ENCODE measurements at regions of chr11 and their contacts with region 1.

Region 1: GRCh38 chr11:12963792-12964536 is 45.2 kb upstream of the RASSF10 start:
- DNase-seq: peak; percentile 7
- ATAC-seq: peak; percentile 97
- H3K4me3 ChIP-seq: no peak overlapping the region
- H3K27ac ChIP-seq: no peak overlapping the region
- H3K4me1 ChIP-seq: no peaks in the 10 kb centered on the region
- H3K27me3 ChIP-seq: no peaks in the 10 kb centered on the region
- CTCF ChIP-seq: peak; percentile 68 to 86 (median 75)
- EP300 ChIP-seq: no peak
- POLR2A ChIP-seq: no peak
- RAD21 ChIP-seq: peak; percentile 75

Region 2: DNA sequence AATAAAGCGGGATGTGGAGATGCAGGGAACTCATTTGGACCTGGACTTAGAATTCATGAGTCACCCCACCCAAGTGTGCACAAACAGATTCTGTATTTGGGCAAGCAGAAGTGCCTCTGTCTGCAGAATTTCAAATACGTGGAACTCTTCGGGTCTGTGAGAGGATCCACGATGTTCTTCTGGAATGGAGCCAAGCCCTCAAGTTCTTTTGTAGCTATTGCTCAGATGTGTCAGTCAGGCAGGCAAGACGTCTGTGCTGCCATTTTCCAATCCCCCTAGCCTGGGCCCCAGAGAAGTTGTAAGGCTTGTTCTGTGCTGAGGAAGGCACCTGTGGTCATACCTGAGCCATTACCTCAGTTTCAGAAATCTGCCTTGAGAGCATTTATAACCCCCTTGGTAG is 87.6 kb before region 1 on chr11:
- CTCF ChIA-PET with region 1: no interaction called
- POLR2A ChIA-PET with region 1: no interaction called
- RAD21 ChIA-PET with region 1: no interaction called
- SMC1A ChIA-PET with region 1: no interaction called
- in situ Hi-C with region 1: no loop called
- intact Hi-C with region 1: no loop called
- DNase-seq: no peak
- ATAC-seq: no peak
- H3K4me3 ChIP-seq: no peak overlapping the region
- H3K27ac ChIP-seq: no peak overlapping the region
- H3K4me1 ChIP-seq: no peaks in the 10 kb centered on the region
- H3K27me3 ChIP-seq: peaks cover 1 to 3% of the 10 kb centered on the region in 2 experiments; a peak in 2 of 4 replicates
- CTCF ChIP-seq: no peak
- EP300 ChIP-seq: no peak
- POLR2A ChIP-seq: no peak
- RAD21 ChIP-seq: no peak

Region 3: DNA sequence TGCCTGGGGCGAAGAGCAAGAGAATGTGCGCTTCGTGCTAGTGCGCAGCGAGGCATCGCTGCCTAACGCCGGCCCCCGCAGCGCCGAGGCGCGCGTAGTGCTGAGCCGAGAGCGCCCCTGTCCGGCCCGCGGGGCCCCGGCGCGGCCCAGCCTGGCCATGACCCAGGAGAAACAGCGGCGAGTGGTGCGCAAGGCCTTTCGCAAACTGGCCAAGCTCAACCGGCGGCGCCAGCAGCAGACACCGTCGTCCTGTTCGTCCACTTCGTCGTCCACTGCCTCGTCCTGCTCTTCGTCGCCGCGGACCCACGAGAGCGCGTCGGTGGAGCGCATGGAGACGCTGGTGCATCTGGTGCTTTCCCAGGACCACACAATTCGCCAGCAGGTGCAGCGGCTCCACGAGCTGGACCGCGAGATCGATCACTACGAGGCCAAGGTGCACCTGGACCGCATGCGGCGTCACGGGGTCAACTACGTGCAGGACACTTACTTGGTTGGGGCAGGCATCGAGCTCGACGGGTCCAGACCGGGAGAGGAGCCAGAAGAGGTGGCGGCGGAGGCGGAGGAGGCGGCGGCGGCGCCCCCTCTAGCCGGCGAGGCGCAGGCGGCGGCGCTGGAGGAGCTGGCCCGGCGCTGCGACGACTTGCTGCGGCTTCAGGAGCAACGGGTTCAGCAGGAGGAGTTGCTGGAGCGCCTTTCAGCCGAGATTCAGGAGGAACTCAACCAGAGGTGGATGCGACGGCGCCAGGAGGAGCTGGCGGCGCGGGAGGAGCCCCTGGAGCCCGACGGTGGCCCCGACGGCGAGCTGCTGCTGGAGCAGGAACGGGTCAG is 46.2 kb after region 1 on chr11:
- CTCF ChIA-PET with region 1: interaction called, 6 read pairs
- POLR2A ChIA-PET with region 1: no interaction called
- RAD21 ChIA-PET with region 1: interaction called, 22 read pairs
- SMC1A ChIA-PET with region 1: interaction called, 3 read pairs
- in situ Hi-C with region 1: no loop called
- intact Hi-C with region 1: no loop called
- DNase-seq: no peak
- ATAC-seq: no peak
- H3K4me3 ChIP-seq: no peak overlapping the region
- H3K27ac ChIP-seq: no peak overlapping the region
- H3K4me1 ChIP-seq: no peaks in the 10 kb centered on the region
- H3K27me3 ChIP-seq: peaks cover 0 to 4% of the 10 kb centered on the region in 2 experiments; a peak in 3 of 4 replicates
- CTCF ChIP-seq: no peak; a peak in 1 of 6 replicates
- EP300 ChIP-seq: no peak
- POLR2A ChIP-seq: no peak
- RAD21 ChIP-seq: no peak

Region 4: GRCh38 chr11:13120691-13121090 is 156.7 kb after region 1 on chr11:
- CTCF ChIA-PET with region 1: interaction called, 50 read pairs
- POLR2A ChIA-PET with region 1: no interaction called
- RAD21 ChIA-PET with region 1: interaction called, 13 read pairs
- SMC1A ChIA-PET with region 1: interaction called, 52 read pairs
- in situ Hi-C with region 1: no loop called
- intact Hi-C with region 1: loop called (anchors 2 kb)
- DNase-seq: no peak
- ATAC-seq: no peak
- H3K4me3 ChIP-seq: no peak overlapping the region
- H3K27ac ChIP-seq: no peak overlapping the region
- H3K4me1 ChIP-seq: no peaks in the 10 kb centered on the region
- H3K27me3 ChIP-seq: no peaks in the 10 kb centered on the region
- CTCF ChIP-seq: no peak
- EP300 ChIP-seq: no peak
- POLR2A ChIP-seq: no peak
- RAD21 ChIP-seq: no peak

Region 5: DNA sequence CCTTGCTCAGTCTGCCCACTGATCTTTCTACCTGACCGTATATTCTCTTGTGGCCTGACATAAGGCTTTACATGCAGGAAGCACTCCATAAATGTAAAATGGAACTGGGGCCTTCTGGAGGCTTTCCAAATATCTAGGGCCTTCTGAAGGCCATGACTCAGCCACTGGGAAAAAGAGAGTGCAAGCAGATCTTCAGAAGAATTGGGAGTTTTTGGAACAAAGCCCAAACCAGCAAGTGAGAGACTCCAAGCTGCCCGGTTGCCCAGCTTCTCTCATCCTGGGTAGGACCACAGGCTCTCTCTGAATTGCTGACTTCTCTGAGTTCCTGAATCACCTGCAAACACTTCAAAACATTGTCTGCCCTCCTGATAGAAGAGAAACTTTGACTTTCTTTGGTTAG is 205.7 kb after region 1 on chr11:
- CTCF ChIA-PET with region 1: interaction called, 5 read pairs
- POLR2A ChIA-PET with region 1: no interaction called
- RAD21 ChIA-PET with region 1: interaction called, 5 read pairs
- SMC1A ChIA-PET with region 1: interaction called, 4 read pairs
- in situ Hi-C with region 1: no loop called
- intact Hi-C with region 1: loop called (anchors 5 kb)
- DNase-seq: no peak
- ATAC-seq: no peak
- H3K4me3 ChIP-seq: no peak overlapping the region
- H3K27ac ChIP-seq: no peak overlapping the region
- H3K4me1 ChIP-seq: no peaks in the 10 kb centered on the region
- H3K27me3 ChIP-seq: peaks cover 0 to 2% of the 10 kb centered on the region in 2 experiments; a peak in 2 of 4 replicates
- CTCF ChIP-seq: no peak
- EP300 ChIP-seq: no peak
- POLR2A ChIP-seq: no peak
- RAD21 ChIP-seq: no peak

Region 6: GRCh38 chr11:13238879-13239514 is 275.0 kb after region 1 on chr11:
- CTCF ChIA-PET with region 1: interaction called, 17 read pairs
- POLR2A ChIA-PET with region 1: no interaction called
- RAD21 ChIA-PET with region 1: interaction called, 5 read pairs
- SMC1A ChIA-PET with region 1: interaction called, 15 read pairs
- in situ Hi-C with region 1: loop called (anchors 5 kb)
- intact Hi-C with region 1: loop called (anchors 1 kb)
- DNase-seq: no peak
- ATAC-seq: peak; percentile 93
- H3K4me3 ChIP-seq: no peak overlapping the region
- H3K27ac ChIP-seq: no peak overlapping the region
- H3K4me1 ChIP-seq: no peaks in the 10 kb centered on the region
- H3K27me3 ChIP-seq: peaks cover 0 to 3% of the 10 kb centered on the region in 2 experiments; a peak in 2 of 4 replicates
- CTCF ChIP-seq: peak; percentile 71 to 91 (median 86)
- EP300 ChIP-seq: no peak
- POLR2A ChIP-seq: no peak
- RAD21 ChIP-seq: peak; percentile 63

Region 7: GRCh38 chr11:13384908-13385640 is 421.1 kb after region 1 on chr11:
- CTCF ChIA-PET with region 1: interaction called, 5 read pairs
- POLR2A ChIA-PET with region 1: no interaction called
- RAD21 ChIA-PET with region 1: no interaction called
- SMC1A ChIA-PET with region 1: no interaction called
- in situ Hi-C with region 1: no loop called
- intact Hi-C with region 1: loop called (anchors 5 kb)
- DNase-seq: peak; percentile 3
- ATAC-seq: peak; percentile 74
- H3K4me3 ChIP-seq: no peak overlapping the region
- H3K27ac ChIP-seq: no peak overlapping the region
- H3K4me1 ChIP-seq: no peaks in the 10 kb centered on the region
- H3K27me3 ChIP-seq: no peaks in the 10 kb centered on the region
- CTCF ChIP-seq: peak; percentile 58 to 69 (median 58)
- EP300 ChIP-seq: no peak
- POLR2A ChIP-seq: no peak
- RAD21 ChIP-seq: peak; percentile 58

Measured in GM12878 (cell line).